ENCODE measurements at regions of chr9 and their contacts with region 1.

Region 1: GRCh38 chr9:135343837-135344522 is 135.6 kb upstream of the PPP1R26 start:
- DNase-seq: peak; percentile 87
- H3K4me3 ChIP-seq: no peak overlapping the region
- H3K27ac ChIP-seq: peak overlapping the region; percentile 93
- H3K4me1 ChIP-seq: peaks cover 59% of the 10 kb centered on the region
- H3K27me3 ChIP-seq: no peaks in the 10 kb centered on the region
- CTCF ChIP-seq: peak; percentile 100

Region 2: GRCh38 chr9:135085830-135086546 is 258.0 kb before region 1 on chr9:
- CTCF ChIA-PET with region 1: interaction called, 5 read pairs
- POLR2A ChIA-PET with region 1: no interaction called
- intact Hi-C with region 1: loop called (anchors 1 kb)
- DNase-seq: peak; percentile 92
- H3K4me3 ChIP-seq: peak overlapping the region; percentile 95
- H3K27ac ChIP-seq: peak overlapping the region; percentile 70
- H3K4me1 ChIP-seq: peaks cover 57% of the 10 kb centered on the region
- H3K27me3 ChIP-seq: no peaks in the 10 kb centered on the region
- CTCF ChIP-seq: peak; percentile 99

Region 3: DNA sequence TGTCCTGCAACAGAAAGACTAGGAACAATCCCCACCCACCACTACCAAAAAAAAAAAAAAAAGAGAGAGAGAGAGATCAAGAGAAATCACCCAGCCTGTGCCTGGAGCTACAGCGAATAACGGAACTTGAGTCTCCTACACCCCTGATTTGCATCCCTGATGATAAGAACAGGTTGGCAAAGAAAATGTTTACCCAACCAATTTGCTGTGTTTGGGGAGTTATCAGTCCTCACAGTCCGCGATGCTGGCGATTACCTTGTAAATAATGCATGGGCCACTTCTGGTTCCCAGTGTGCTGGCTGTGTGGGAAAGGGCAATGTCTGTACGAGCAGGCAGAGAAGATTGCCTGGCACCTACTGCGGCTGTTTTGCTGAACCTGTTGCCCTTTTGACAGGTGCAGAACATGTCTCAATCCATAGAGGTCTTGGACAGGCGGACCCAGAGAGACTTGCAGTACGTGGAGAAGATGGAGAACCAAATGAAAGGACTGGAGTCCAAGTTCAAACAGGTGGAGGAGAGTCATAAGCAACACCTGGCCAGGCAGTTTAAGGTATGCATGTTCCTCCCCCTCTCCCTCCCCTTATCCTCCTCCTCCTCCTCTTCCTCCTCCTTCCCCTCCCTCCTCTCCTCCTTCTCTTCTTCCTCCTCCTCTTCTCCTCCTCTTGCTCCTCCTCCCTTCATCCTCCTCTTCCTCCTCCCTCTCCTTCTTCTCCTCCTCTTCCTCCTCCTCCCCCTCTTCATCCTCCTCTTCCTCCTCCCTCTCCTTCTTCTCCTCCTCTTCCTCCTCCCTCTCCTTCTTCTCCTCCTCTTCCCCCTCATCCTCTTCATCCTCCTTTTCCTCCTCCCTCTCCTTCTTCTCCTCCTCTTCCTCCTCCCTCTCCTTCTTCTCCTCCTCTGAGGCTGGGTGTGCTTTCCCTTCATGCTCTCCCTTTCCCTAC is 248.2 kb before region 1 on chr9:
- CTCF ChIA-PET with region 1: no interaction called
- POLR2A ChIA-PET with region 1: no interaction called
- intact Hi-C with region 1: loop called (anchors 2 kb)
- DNase-seq: peak; percentile 51
- H3K4me3 ChIP-seq: peak overlapping the region; percentile 13
- H3K27ac ChIP-seq: peak overlapping the region; percentile 83
- H3K4me1 ChIP-seq: peaks cover 57% of the 10 kb centered on the region
- H3K27me3 ChIP-seq: no peaks in the 10 kb centered on the region
- CTCF ChIP-seq: no peak

Region 4: GRCh38 chr9:135156525-135157510 is 187.2 kb before region 1 on chr9:
- CTCF ChIA-PET with region 1: no interaction called
- POLR2A ChIA-PET with region 1: no interaction called
- intact Hi-C with region 1: loop called (anchors 2 kb)
- DNase-seq: peak; percentile 92
- H3K4me3 ChIP-seq: peak overlapping the region; percentile 46
- H3K27ac ChIP-seq: peak overlapping the region; percentile 95
- H3K4me1 ChIP-seq: peaks cover 60% of the 10 kb centered on the region
- H3K27me3 ChIP-seq: no peaks in the 10 kb centered on the region
- CTCF ChIP-seq: no peak

Region 5: DNA sequence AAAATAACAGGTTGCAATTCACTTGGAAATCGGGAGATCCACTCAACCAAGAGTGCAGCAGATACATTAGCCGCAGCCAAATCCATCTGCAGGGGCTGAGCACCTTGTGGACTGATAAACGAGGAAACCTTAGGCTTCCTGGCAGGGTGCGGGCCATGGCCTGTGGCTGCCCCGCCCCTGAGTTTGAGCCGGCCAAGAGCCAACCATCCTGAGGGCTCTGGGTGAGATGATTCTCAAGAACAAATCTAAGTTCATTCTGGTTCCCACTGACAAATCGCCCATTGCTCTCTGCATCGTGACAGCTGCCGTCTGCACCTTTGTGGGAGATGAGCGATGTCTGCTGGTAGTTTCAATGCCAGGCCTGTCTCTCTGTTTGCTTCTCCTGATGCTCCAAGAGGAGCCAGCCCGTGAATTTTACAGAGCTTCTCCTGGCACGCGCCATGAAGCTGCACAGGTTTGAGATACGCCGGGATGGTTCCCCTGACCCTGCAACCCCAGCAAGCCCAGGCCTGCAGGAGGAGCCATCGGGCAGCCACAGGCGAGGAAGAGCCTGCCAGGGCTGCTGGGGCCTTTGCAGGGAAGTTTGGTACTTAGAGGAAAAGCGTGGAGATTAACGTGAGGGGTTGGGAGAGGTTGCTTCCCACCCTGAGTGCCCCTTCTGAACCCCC is 102.5 kb before region 1 on chr9:
- CTCF ChIA-PET with region 1: no interaction called
- POLR2A ChIA-PET with region 1: no interaction called
- intact Hi-C with region 1: no loop called
- DNase-seq: no peak
- H3K4me3 ChIP-seq: no peak overlapping the region
- H3K27ac ChIP-seq: no peak overlapping the region
- H3K4me1 ChIP-seq: peaks cover 6% of the 10 kb centered on the region
- H3K27me3 ChIP-seq: no peaks in the 10 kb centered on the region
- CTCF ChIP-seq: no peak; the same call in 1 of the 2 replicates

Region 6: GRCh38 chr9:135392475-135392874 is 48.5 kb after region 1 on chr9:
- CTCF ChIA-PET with region 1: no interaction called
- POLR2A ChIA-PET with region 1: no interaction called
- intact Hi-C with region 1: no loop called
- DNase-seq: no peak
- H3K4me3 ChIP-seq: no peak overlapping the region
- H3K27ac ChIP-seq: no peak overlapping the region
- H3K4me1 ChIP-seq: no peaks in the 10 kb centered on the region
- H3K27me3 ChIP-seq: no peaks in the 10 kb centered on the region
- CTCF ChIP-seq: no peak

Region 7: GRCh38 chr9:135403813-135404695 is 60.1 kb after region 1 on chr9:
- CTCF ChIA-PET with region 1: no interaction called
- POLR2A ChIA-PET with region 1: no interaction called
- intact Hi-C with region 1: loop called (anchors 2 kb)
- DNase-seq: no peak
- H3K4me3 ChIP-seq: no peak overlapping the region
- H3K27ac ChIP-seq: no peak overlapping the region
- H3K4me1 ChIP-seq: no peaks in the 10 kb centered on the region
- H3K27me3 ChIP-seq: no peaks in the 10 kb centered on the region
- CTCF ChIP-seq: no peak

Measured in A673 (cell line).